ENCODE measurements at regions of chr3 and their contacts with region 1.

Region 1: GRCh38 chr3:159884661-159885402 is 103.8 kb upstream of the IL12A start:
- DNase-seq: no peak
- H3K4me3 ChIP-seq: no peak overlapping the region
- H3K27ac ChIP-seq: peak overlapping the region; percentile 29
- H3K4me1 ChIP-seq: peaks cover 82% of the 10 kb centered on the region
- H3K27me3 ChIP-seq: no peaks in the 10 kb centered on the region
- CTCF ChIP-seq: peak; percentile 70

Region 2: GRCh38 chr3:159839561-159840379 is 45.1 kb before region 1 on chr3:
- intact Hi-C with region 1: loop called (anchors 10 kb)
- DNase-seq: peak; percentile 39
- H3K4me3 ChIP-seq: peak within 1 kb of the TSS; percentile 66
- H3K27ac ChIP-seq: peak within 1 kb of the TSS; percentile 85
- H3K4me1 ChIP-seq: peaks cover 83% of the 10 kb centered on the region
- H3K27me3 ChIP-seq: no peaks in the 10 kb centered on the region
- CTCF ChIP-seq: no peak

Region 3: DNA sequence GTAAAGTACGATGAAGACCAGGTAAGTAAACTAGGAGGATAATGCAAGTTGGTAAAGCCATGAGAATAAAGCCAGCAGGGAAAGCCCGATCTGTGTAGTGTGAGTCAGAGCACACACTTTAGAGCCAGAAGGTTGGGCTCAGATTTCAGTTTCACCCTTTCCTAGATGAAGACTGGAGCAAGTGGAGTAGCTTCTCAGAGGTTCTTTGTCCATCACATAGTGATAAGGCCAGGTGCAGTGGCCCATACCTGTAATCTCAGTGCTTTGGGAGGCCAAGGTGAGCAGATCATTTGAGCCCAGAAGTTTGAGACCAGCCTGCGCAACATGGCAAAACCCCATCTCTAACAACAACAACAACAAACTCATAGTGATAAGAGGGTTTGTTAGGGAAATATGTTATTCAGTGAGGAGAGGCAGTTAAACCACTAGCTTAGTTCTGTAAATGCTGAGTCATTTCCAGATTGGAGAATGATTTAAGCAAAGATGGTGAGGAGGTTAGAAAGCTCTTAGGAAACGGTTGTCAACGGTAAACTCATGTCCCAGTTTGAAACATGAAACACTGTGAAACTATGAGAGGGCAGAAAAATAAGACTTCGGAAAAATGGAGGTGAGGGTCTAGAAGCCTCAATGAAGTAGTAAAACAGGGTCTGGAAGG is 142.8 kb after region 1 on chr3:
- intact Hi-C with region 1: no loop called
- DNase-seq: no peak
- H3K4me3 ChIP-seq: no peak overlapping the region
- H3K27ac ChIP-seq: no peak overlapping the region
- H3K4me1 ChIP-seq: no peaks in the 10 kb centered on the region
- H3K27me3 ChIP-seq: no peaks in the 10 kb centered on the region
- CTCF ChIP-seq: no peak

Measured in left ventricle myocardium inferior (tissue), 1 donor.